Heart right ventricle (tissue), 16 donors: ENCODE measurements at regions of chr6 and their contacts with region 1.

Region 1: DNA sequence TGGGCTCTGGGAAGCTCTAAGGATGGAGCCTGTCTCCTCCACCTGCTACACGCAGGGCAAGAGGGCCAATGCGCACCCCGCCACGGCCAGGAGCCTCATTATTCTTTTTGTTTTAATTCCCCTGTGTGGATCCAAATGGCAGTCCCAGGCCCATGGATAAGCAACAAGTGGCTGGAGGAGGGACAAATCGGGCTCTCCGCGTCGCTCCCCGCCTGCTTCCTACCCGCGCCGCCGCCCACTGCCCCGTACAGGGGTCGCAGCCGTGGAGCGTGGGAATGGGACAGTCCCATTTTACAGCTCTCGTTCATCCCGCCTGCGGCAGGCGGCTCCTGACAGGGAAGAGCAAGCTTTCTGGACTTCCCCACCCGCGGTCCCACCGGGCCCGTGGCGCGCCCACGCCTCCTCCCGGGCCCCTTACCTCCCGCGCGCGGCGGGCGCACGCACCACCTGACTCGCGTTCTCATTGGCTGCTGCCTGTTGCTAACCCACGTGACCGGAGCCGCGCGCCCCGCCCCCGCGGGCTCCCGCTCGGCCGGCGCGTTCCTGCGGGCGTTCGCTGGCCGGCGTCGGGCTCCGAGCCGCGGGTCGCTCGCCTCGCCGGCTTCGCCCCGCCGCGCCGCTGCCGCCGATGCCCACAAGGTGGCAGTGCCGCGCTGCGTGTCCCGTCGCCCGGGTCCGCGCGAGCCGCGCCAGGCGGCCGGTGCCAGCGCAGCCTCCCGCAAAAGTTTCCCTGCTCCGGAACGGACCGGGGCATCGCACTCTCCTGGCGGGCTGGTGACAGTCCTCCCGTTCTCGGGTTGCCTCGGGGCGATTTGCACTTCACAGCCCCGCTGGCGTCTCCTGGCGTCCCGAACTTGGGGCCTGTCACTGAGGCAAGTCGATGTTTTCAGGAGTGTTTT is 93.3 kb downstream of the CD83 start:
- DNase-seq: peak; percentile 95
- ATAC-seq: peak; percentile 93 to 98 (median 96)
- H3K4me3 ChIP-seq: peak overlapping the region; percentile 47 to 95 (median 70)
- H3K27ac ChIP-seq: peak overlapping the region; percentile 32 to 94 (median 88)
- H3K4me1 ChIP-seq: peaks cover 0 to 22% (median 17%) of the 10 kb centered on the region in 9 donors
- H3K27me3 ChIP-seq: no peaks in the 10 kb centered on the region
- CTCF ChIP-seq: peak; percentile 54 to 95 (median 65)

Region 2: DNA sequence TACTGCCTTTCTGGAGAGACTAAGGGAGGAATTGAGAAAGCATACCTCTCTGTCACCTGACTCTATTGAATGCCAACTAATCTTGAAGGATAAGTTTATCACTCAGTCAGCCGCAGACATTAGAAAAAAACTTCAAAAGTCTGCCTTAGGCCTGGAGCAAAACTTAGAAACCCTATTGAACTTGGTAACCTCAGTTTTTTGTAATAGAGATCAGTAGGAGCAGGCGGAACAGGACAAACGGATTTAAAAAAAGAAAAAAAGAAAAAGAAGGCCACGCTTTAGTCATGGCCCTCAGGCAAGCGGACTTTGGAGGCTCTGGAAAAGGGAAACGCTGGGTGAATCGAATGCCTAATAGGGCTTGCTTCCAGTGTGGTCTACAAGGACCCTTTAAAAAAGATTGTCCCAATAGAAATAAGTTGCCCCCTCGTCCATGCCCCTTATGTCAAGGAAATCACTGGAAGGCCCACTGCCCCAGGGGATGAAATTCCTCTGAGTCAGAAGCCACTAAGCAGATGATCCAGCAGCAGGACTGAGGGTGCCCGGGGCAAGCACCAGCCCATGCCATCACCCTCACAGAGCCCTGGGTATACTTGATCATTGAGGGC is 329.2 kb before region 1 on chr6:
- intact Hi-C with region 1: no loop called
- DNase-seq: no peak
- ATAC-seq: no peak
- H3K4me3 ChIP-seq: no peak overlapping the region
- H3K27ac ChIP-seq: no peak overlapping the region
- H3K4me1 ChIP-seq: no peaks in the 10 kb centered on the region
- H3K27me3 ChIP-seq: peaks cover 0 to 2% (median 0%) of the 10 kb centered on the region in 7 donors
- CTCF ChIP-seq: no peak

Region 3: DNA sequence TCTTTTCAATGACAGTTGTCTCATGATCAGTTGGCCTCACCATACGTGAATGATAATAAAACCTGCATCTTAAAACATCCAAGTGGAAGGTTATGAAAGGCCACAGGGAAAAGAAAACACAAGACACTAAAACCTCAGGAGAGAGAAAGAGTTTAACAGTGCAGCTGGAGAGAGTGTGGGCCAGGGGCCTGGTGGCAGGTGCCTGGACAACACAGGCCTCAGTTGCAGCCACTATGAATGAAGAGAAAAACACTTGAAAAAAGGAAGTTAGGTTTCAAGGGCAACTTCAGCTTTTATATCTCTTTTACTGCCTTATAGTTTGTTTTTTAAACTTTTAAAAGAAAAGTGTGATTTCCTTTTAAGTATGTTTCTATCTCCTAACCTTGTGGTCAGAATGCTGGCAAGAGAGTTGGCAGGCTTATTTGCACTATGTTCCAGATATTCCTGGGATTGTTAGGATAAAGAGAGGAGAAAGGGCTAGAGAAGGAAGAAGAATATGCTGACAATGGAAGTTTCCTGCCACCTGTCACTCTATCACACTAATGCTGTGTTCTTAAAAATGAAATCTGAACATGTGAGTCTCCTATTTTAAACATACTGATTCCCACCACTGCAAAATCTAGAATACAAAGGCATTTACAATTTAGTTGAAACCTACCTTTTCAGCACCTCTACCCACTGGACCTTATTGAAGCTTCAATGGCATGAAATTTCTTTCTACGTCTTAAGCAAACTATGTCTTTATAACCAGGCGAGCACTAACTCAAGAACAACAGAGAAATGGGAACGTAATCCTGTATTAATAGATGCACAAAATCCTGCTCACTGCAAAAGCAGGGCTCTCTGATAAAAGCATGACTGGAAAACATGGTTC is 129.0 kb after region 1 on chr6:
- intact Hi-C with region 1: no loop called
- DNase-seq: no peak
- ATAC-seq: no peak
- H3K4me3 ChIP-seq: no peak overlapping the region
- H3K27ac ChIP-seq: no peak overlapping the region
- H3K4me1 ChIP-seq: peaks cover 0 to 18% (median 0%) of the 10 kb centered on the region in 9 donors
- H3K27me3 ChIP-seq: no peaks in the 10 kb centered on the region
- CTCF ChIP-seq: no peak

Region 4: DNA sequence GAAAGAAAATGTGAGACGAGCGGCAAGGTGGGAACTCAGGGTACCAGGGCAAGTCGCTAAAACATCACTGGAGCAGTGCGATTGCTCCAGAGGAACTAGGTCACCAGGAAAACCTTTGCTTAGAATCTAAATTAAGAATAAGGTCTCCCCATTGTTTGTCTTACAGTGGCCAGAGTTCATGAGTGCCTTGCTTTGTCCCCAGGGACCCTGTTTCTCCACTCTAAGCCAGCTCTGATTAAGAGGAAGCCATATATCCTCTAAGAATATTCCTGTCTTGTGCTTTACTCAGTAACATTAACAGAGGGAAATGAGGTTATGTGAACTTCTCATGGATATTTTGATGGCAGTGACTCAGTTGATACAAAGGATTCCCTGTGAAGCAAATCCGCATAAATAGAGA is 212.4 kb after region 1 on chr6:
- intact Hi-C with region 1: loop called in 1 of 10 experiments (anchors 5 kb)
- DNase-seq: peak in 1 of 2 donors; percentile 75
- ATAC-seq: peak; percentile 91 to 98 (median 94)
- H3K4me3 ChIP-seq: no peak overlapping the region
- H3K27ac ChIP-seq: peak overlapping the region in 6 of 10 donors; percentile 22 to 75 (median 60)
- H3K4me1 ChIP-seq: peaks cover 0 to 26% (median 8%) of the 10 kb centered on the region in 9 donors
- H3K27me3 ChIP-seq: no peaks in the 10 kb centered on the region
- CTCF ChIP-seq: no peak

Region 5: GRCh38 chr6:14638906-14639761 is 428.2 kb after region 1 on chr6:
- intact Hi-C with region 1: loop called in 1 of 10 experiments (anchors 10 kb)
- DNase-seq: peak; percentile 67 to 79
- ATAC-seq: peak; percentile 91 to 96 (median 94)
- H3K4me3 ChIP-seq: peak overlapping the region in 9 of 10 donors; percentile 7 to 45 (median 35)
- H3K27ac ChIP-seq: peak overlapping the region; percentile 48 to 90 (median 79)
- H3K4me1 ChIP-seq: peaks cover 0 to 67% (median 35%) of the 10 kb centered on the region in 9 donors
- H3K27me3 ChIP-seq: no peaks in the 10 kb centered on the region
- CTCF ChIP-seq: peak in 5 of 9 donors; percentile 8 to 30 (median 20)

Region 6: DNA sequence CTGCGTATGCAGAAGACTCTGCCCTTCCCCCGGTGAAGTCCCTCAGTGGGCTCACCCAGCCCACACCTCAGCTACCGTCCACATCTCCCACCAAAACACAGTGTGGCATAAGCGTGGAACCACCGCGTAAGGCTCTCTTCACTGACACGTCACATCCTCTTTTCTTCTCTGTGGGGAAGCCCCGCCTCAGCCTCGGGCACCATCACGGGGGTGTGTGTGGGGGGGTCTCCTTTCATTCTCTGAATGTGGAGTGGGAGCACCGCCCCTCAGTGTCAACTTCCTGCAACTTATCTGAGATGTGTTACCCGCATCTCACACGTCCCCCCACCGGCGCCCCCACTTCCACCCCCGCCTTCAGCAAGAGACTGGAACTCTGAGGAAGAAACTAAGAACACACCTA is 646.6 kb after region 1 on chr6:
- intact Hi-C with region 1: no loop called
- DNase-seq: peak in 1 of 2 donors; percentile 12
- ATAC-seq: peak in 5 of 8 donors; percentile 29 to 55 (median 35)
- H3K4me3 ChIP-seq: peak overlapping the region in 1 of 10 donors; percentile 26
- H3K27ac ChIP-seq: peak overlapping the region in 1 of 10 donors; percentile 56
- H3K4me1 ChIP-seq: peaks cover 0 to 17% (median 0%) of the 10 kb centered on the region in 9 donors
- H3K27me3 ChIP-seq: no peaks in the 10 kb centered on the region
- CTCF ChIP-seq: no peak

Region 7: GRCh38 chr6:15245361-15246216 is 1034.7 kb after region 1 on chr6 and contains the start of gene JARID2:
- intact Hi-C with region 1: loop called in 6 of 10 experiments (anchors 1 to 10 kb)
- DNase-seq: peak; percentile 99
- ATAC-seq: peak; percentile 83 to 93 (median 88)
- H3K4me3 ChIP-seq: peak within 1 kb of the TSS; percentile 56 to 90 (median 82)
- H3K27ac ChIP-seq: peak within 1 kb of the TSS; percentile 90 to 98 (median 94)
- H3K4me1 ChIP-seq: peaks cover 0 to 39% (median 30%) of the 10 kb centered on the region in 9 donors
- H3K27me3 ChIP-seq: no peaks in the 10 kb centered on the region
- CTCF ChIP-seq: peak in 1 of 9 donors; percentile 5
- total RNA-seq, gene JARID2: 5.8 to 11.6 (median 9.4) TPM

Region 8: GRCh38 chr6:15491255-15491985 is 1280.5 kb after region 1 on chr6:
- intact Hi-C with region 1: loop called in 5 of 10 experiments (anchors 5 to 10 kb)
- DNase-seq: peak; percentile 72 to 84
- ATAC-seq: peak in 7 of 8 donors; percentile 55 to 86 (median 78)
- H3K4me3 ChIP-seq: no peak overlapping the region
- H3K27ac ChIP-seq: peak overlapping the region in 5 of 10 donors; percentile 9 to 55 (median 36)
- H3K4me1 ChIP-seq: peaks cover 4 to 43% (median 29%) of the 10 kb centered on the region in 9 donors
- H3K27me3 ChIP-seq: no peaks in the 10 kb centered on the region
- CTCF ChIP-seq: peak; percentile 88 to 98 (median 97)

Region 9: GRCh38 chr6:15621203-15622044 is 1410.5 kb after region 1 on chr6:
- intact Hi-C with region 1: loop called in 7 of 10 experiments (anchors 2 to 10 kb)
- DNase-seq: peak; percentile 34 to 45
- ATAC-seq: peak; percentile 83 to 94 (median 90)
- H3K4me3 ChIP-seq: no peak overlapping the region
- H3K27ac ChIP-seq: peak overlapping the region; percentile 46 to 80 (median 75)
- H3K4me1 ChIP-seq: peaks cover 0 to 41% (median 33%) of the 10 kb centered on the region in 9 donors
- H3K27me3 ChIP-seq: no peaks in the 10 kb centered on the region
- CTCF ChIP-seq: no peak